ENCODE measurements at regions of chr5 and their contacts with region 1.

Region 1: GRCh38 chr5:39148983-39149534 is 70.3 kb downstream of the FYB1 start:
- DNase-seq: peak in 1 of 2 donors; percentile 75
- ATAC-seq: peak in 2 of 3 donors; percentile 42 to 53
- H3K4me3 ChIP-seq: no peak overlapping the region
- H3K4me3 Mint-ChIP-seq: no peak overlapping the region
- H3K27ac ChIP-seq: no peak overlapping the region
- H3K27ac Mint-ChIP-seq: peak overlapping the region; percentile 65 to 82
- H3K4me1 ChIP-seq: peaks cover 2% of the 10 kb centered on the region
- H3K4me1 Mint-ChIP-seq: peaks cover 31 to 36% of the 10 kb centered on the region in 2 donors
- H3K27me3 ChIP-seq: no peaks in the 10 kb centered on the region
- H3K27me3 Mint-ChIP-seq: no peaks in the 10 kb centered on the region
- CTCF ChIP-seq: peak; percentile 69

Region 2: DNA sequence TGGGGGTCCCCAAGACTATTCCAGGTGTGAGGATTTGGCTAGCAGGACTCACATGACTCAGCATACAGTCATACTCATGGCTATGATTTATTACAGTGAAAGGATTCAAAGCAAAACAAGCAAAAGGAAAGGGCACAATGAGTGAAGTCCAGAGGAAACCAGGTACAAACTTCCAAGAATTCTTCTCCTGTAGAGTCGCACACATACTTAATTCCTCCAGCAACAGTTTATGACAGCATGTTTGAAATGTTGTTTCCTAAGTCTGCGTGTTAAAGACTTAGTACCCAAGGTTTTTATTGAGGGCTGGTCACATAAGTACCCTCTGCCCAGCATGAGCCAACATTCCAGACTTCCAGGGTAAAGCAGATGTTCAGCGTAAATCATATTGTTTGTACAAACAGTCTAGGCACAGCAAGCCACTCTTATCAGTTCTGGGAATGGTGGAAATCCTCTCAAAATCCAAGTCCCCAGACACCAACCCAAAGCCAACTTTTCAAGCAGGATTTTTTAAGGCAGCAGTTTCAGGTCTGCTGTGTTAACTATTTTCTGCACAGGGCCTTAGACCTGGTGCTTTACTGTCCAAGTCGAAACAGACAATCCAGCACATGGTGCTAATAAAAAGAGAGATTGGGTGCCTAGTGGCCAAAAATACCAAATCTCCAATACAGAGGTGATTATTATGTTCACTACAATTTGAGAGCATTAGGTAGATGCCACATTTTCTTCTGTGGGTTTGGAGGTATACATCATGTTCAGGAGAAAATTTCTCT is 56.3 kb before region 1 on chr5:
- intact Hi-C with region 1: no loop called
- DNase-seq: no peak
- ATAC-seq: no peak
- H3K4me3 ChIP-seq: no peak overlapping the region
- H3K4me3 Mint-ChIP-seq: no peak overlapping the region
- H3K27ac ChIP-seq: no peak overlapping the region
- H3K27ac Mint-ChIP-seq: no peak overlapping the region
- H3K4me1 ChIP-seq: no peaks in the 10 kb centered on the region
- H3K4me1 Mint-ChIP-seq: no peaks in the 10 kb centered on the region
- H3K27me3 ChIP-seq: no peaks in the 10 kb centered on the region
- H3K27me3 Mint-ChIP-seq: peaks cover 16 to 23% of the 10 kb centered on the region in 2 donors
- CTCF ChIP-seq: no peak

Region 3: DNA sequence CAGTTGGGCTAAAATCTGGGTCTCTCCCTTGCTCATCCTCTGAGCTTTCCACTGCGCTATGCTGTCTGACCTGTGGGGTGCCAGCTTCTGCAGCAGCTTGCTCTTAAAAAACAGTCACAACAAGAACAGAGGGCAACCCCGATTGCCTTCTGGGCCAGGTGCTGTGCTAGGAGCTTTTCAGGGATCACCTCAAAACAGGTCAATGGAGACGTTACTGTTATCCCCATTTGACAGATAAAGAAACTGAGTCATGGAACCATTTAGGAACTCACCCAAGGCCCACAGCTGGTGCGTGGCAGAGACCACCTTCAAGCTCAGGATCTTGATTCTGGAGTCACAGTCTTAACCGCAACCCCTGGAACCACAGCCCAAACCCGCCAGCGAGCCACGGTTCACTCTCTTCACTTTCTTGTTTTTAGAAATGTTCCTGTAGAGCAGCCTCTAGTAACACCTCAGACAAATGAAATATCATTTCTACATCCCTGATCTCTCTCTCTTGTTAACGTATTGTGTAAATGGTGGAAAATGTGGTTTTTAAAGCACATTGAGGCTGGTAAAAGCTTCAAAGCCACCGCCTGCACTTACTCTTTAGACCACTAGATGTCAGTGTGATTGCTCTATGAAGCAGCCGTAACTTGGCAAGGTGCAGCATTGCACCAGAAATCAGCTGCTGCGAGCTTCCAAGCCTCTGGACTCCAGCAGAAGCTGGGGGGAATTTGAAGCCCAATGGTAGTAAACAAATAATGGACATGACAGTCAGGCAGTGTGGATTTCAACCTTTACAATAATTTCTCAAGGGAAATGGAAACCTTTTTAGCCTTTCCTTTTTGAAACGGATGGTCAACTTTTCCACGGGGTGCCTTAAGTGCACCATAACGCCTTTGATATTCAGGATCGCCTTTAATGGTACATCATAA is 68.6 kb after region 1 on chr5:
- intact Hi-C with region 1: loop called (anchors 2 kb)
- DNase-seq: peak; percentile 60 to 92
- ATAC-seq: peak; percentile 69 to 87 (median 78)
- H3K4me3 ChIP-seq: no peak overlapping the region
- H3K4me3 Mint-ChIP-seq: peak overlapping the region; percentile 67
- H3K27ac ChIP-seq: peak overlapping the region; percentile 53
- H3K27ac Mint-ChIP-seq: peak overlapping the region; percentile 84 to 96
- H3K4me1 ChIP-seq: peaks cover 45% of the 10 kb centered on the region
- H3K4me1 Mint-ChIP-seq: peaks cover 72 to 78% of the 10 kb centered on the region in 2 donors
- H3K27me3 ChIP-seq: no peaks in the 10 kb centered on the region
- H3K27me3 Mint-ChIP-seq: no peaks in the 10 kb centered on the region
- CTCF ChIP-seq: peak; percentile 96

Region 4: DNA sequence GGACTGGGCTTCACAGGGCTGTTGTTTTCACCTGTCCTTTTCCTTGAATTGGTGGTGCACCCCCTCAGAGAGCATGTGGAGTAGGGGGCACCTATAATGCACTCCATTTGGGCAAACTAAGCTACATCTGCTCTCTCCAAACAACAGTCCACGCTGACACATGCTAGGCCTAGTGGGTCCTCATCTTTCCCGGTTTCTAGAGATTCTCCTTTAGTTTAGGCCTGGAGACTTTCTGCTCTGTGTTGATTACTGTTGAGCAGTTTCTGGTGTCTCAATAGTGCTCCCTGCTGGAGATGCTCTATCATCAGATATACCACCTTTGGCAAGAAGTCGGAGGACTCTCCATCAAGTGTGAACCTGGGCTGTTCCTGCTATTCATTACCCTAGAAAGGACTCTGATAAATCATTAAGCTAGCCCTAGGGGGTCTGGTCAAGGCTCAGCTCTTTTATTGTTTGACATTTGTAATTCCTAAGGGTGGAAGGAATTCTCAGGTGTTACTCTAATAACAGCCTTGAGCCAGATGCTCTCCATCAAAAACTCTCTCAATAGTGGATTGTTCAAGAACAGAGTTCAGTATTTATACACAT is 134.3 kb after region 1 on chr5:
- intact Hi-C with region 1: loop called (anchors 1 kb)
- DNase-seq: peak in 1 of 2 donors; percentile 91
- ATAC-seq: peak; percentile 93 to 100 (median 100)
- H3K4me3 ChIP-seq: no peak overlapping the region
- H3K4me3 Mint-ChIP-seq: no peak overlapping the region
- H3K27ac ChIP-seq: no peak overlapping the region
- H3K27ac Mint-ChIP-seq: peak overlapping the region; percentile 32 to 69
- H3K4me1 ChIP-seq: peaks cover 5% of the 10 kb centered on the region
- H3K4me1 Mint-ChIP-seq: peaks cover 15% of the 10 kb centered on the region in 2 donors
- H3K27me3 ChIP-seq: peaks cover 4% of the 10 kb centered on the region
- H3K27me3 Mint-ChIP-seq: peaks cover 11 to 13% of the 10 kb centered on the region in 2 donors
- CTCF ChIP-seq: peak; percentile 75

Region 5: GRCh38 chr5:39547553-39548154 is 398.6 kb after region 1 on chr5:
- intact Hi-C with region 1: loop called (anchors 10 kb)
- DNase-seq: peak in 1 of 2 donors; percentile 68
- ATAC-seq: peak; percentile 42 to 65 (median 46)
- H3K4me3 ChIP-seq: no peak overlapping the region
- H3K4me3 Mint-ChIP-seq: peak overlapping the region; percentile 18
- H3K27ac ChIP-seq: no peak overlapping the region
- H3K27ac Mint-ChIP-seq: peak overlapping the region in 1 of 2 donors; percentile 47
- H3K4me1 ChIP-seq: no peaks in the 10 kb centered on the region
- H3K4me1 Mint-ChIP-seq: peaks cover 0 to 5% of the 10 kb centered on the region in 2 donors
- H3K27me3 ChIP-seq: no peaks in the 10 kb centered on the region
- H3K27me3 Mint-ChIP-seq: no peaks in the 10 kb centered on the region
- CTCF ChIP-seq: peak; percentile 77

Measured in natural killer cell (primary cell).